Activated CD4-positive, alpha-beta memory T cell treated with anti-CD3 and anti-CD28 coated beads for 36 hours (primary cell): ENCODE measurements at regions of chr3 and their contacts with region 1.

Region 1: GRCh38 chr3:151305101-151305750 is 11.4 kb downstream of the GPR87 start:
- DNase-seq: peak; percentile 52
- H3K4me3 Mint-ChIP-seq: peak overlapping the region; percentile 20
- H3K27ac Mint-ChIP-seq: peak overlapping the region; percentile 56
- H3K4me1 Mint-ChIP-seq: peaks cover 78% of the 10 kb centered on the region
- H3K27me3 Mint-ChIP-seq: peaks cover 17% of the 10 kb centered on the region

Region 2: DNA sequence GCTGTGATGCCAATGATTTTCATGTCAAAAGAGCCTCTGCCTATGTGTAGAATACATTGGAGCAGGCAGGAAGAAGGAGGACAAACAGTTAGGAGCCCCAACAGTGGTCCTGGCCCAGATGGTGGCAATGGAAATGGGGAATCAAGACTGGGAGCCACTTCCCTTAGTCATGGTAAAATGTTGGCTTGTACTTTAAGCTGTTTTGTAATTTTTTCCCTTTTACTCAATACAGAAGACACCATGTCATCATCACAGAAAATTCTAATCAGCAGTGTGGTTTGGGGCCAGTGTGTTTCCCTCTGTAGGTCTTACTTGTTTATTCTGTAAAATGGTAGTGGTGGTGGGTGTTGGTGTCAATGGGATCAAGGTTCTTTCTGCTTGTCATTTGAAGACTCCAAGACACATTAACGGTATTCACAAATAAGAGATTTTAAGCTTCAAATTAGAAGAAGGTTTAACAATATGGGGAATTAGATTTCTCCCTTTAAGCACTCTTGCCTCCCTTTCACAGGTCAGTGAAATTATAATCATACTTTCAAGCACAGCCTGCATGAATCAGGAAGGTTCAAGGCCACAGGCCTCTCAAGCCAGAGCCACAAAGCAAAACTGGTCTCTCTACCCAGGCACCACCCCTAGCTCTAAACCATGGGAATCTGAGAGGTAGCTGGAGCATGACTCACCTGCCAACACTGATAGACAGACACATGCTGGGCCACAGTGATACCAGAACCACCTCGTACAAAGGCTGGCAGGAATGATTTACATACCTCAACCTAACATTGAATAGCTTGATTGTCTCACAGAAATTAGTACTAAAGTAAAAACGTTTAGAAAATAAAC is 567.1 kb before region 1 on chr3:
- CTCF ChIA-PET with region 1: no interaction called
- POLR2A ChIA-PET with region 1: no interaction called
- intact Hi-C with region 1: loop called (anchors 5 kb)
- DNase-seq: peak; percentile 79
- H3K4me3 Mint-ChIP-seq: peak overlapping the region; percentile 38
- H3K27ac Mint-ChIP-seq: peak overlapping the region; percentile 99
- H3K4me1 Mint-ChIP-seq: peaks cover 73% of the 10 kb centered on the region
- H3K27me3 Mint-ChIP-seq: no peaks in the 10 kb centered on the region

Region 3: GRCh38 chr3:151276687-151277042 is 28.6 kb before region 1 on chr3:
- CTCF ChIA-PET with region 1: interaction called, 6 read pairs
- POLR2A ChIA-PET with region 1: no interaction called
- intact Hi-C with region 1: loop called (anchors 1 kb)
- DNase-seq: peak; percentile 55
- H3K4me3 Mint-ChIP-seq: peak overlapping the region; percentile 53
- H3K27ac Mint-ChIP-seq: peak overlapping the region; percentile 84
- H3K4me1 Mint-ChIP-seq: peaks cover 38% of the 10 kb centered on the region
- H3K27me3 Mint-ChIP-seq: no peaks in the 10 kb centered on the region

Region 4: GRCh38 chr3:151282921-151283320 is 22.3 kb before region 1 on chr3:
- CTCF ChIA-PET with region 1: interaction called, 6 read pairs
- POLR2A ChIA-PET with region 1: interaction called, 3 read pairs
- intact Hi-C with region 1: loop called (anchors 1 kb)
- DNase-seq: no peak
- H3K4me3 Mint-ChIP-seq: no peak overlapping the region
- H3K27ac Mint-ChIP-seq: peak overlapping the region; percentile 62
- H3K4me1 Mint-ChIP-seq: peaks cover 32% of the 10 kb centered on the region
- H3K27me3 Mint-ChIP-seq: no peaks in the 10 kb centered on the region

Region 5: GRCh38 chr3:151316267-151316991 is 11.2 kb after region 1 on chr3 and contains the start of gene GPR87:
- CTCF ChIA-PET with region 1: interaction called, 32 read pairs
- POLR2A ChIA-PET with region 1: interaction called, 42 read pairs
- intact Hi-C with region 1: loop called (anchors 1 kb)
- DNase-seq: peak; percentile 61
- H3K4me3 Mint-ChIP-seq: peak within 1 kb of the TSS; percentile 17
- H3K27ac Mint-ChIP-seq: peak within 1 kb of the TSS; percentile 68
- H3K4me1 Mint-ChIP-seq: peaks cover 24% of the 10 kb centered on the region
- H3K27me3 Mint-ChIP-seq: peaks cover 8% of the 10 kb centered on the region
- total RNA-seq, gene GPR87: 1.1 TPM

Region 6: GRCh38 chr3:151327571-151328198 is 22.5 kb after region 1 on chr3:
- CTCF ChIA-PET with region 1: interaction called, 15 read pairs
- POLR2A ChIA-PET with region 1: interaction called, 3 read pairs
- intact Hi-C with region 1: no loop called
- DNase-seq: no peak
- H3K4me3 Mint-ChIP-seq: no peak overlapping the region
- H3K27ac Mint-ChIP-seq: no peak overlapping the region
- H3K4me1 Mint-ChIP-seq: peaks cover 11% of the 10 kb centered on the region
- H3K27me3 Mint-ChIP-seq: peaks cover 13% of the 10 kb centered on the region

Region 7: GRCh38 chr3:151356794-151357462 is 51.7 kb after region 1 on chr3:
- CTCF ChIA-PET with region 1: no interaction called
- POLR2A ChIA-PET with region 1: no interaction called
- intact Hi-C with region 1: no loop called
- DNase-seq: no peak
- H3K4me3 Mint-ChIP-seq: no peak overlapping the region
- H3K27ac Mint-ChIP-seq: no peak overlapping the region
- H3K4me1 Mint-ChIP-seq: peaks cover 4% of the 10 kb centered on the region
- H3K27me3 Mint-ChIP-seq: peaks cover 3% of the 10 kb centered on the region

Region 8: DNA sequence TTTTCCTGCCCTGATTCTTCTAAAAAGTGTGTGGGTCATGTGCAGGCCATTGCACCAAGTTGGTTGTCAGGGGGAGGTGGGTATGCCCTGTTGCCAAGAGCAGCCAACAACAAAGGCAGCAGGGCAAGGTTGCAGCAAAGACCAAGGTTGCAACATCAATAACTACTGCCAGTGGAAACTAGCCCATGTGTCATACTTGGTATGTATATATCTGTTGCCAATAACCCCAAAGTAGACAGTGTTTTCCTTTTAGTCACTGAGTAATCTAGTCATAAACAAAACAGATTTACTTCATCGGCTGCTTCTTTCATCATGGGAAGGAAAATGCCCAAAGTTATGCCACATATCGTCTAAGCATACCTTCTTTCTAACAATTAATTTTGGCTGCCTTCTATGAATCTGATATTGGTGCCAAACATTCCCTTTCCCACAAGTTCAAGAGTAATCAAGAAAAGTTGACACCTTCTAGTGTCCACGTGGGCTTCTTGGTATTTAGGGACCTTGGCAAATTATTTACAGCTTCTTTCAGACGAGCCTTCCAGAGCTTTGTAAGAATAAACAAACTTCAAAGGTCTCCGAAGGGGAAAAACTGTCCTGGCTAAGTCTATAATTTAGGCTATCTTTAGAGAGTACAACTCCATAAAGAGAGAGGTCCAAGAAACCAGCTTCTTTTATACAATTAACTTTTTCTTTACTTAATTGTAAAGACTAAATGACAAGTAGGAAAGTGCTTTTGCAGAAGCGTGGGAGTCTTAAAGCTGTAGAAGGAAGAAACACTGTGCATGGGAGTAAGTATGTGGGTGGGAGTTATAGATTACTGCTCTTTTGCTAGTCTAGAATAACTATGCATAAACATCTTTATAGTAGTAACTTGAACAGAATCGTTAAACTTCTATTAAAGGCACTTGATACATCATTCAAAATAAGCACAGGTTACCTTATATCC is 953.5 kb after region 1 on chr3:
- CTCF ChIA-PET with region 1: no interaction called
- POLR2A ChIA-PET with region 1: no interaction called
- intact Hi-C with region 1: loop called (anchors 5 kb)
- DNase-seq: peak; percentile 86
- H3K4me3 Mint-ChIP-seq: peak overlapping the region; percentile 70
- H3K27ac Mint-ChIP-seq: peak overlapping the region; percentile 95
- H3K4me1 Mint-ChIP-seq: peaks cover 83% of the 10 kb centered on the region
- H3K27me3 Mint-ChIP-seq: no peaks in the 10 kb centered on the region